Activated naive CD4-positive, alpha-beta T cell treated with anti-CD3 and anti-CD28 coated beads, Interleukin-2, amount 10 ng/mL, durations not matched to agents 7 days and 5 days (primary cell): ENCODE measurements at regions of chr9 and their contacts with region 1.

Region 1: GRCh38 chr9:15606643-15607472 is 54.0 kb downstream of the CCDC171 start:
- DNase-seq: no peak
- H3K4me3 Mint-ChIP-seq: no peak overlapping the region
- H3K27ac Mint-ChIP-seq: no peak overlapping the region
- H3K4me1 Mint-ChIP-seq: peaks cover 6% of the 10 kb centered on the region
- H3K27me3 Mint-ChIP-seq: no peaks in the 10 kb centered on the region

Region 2: DNA sequence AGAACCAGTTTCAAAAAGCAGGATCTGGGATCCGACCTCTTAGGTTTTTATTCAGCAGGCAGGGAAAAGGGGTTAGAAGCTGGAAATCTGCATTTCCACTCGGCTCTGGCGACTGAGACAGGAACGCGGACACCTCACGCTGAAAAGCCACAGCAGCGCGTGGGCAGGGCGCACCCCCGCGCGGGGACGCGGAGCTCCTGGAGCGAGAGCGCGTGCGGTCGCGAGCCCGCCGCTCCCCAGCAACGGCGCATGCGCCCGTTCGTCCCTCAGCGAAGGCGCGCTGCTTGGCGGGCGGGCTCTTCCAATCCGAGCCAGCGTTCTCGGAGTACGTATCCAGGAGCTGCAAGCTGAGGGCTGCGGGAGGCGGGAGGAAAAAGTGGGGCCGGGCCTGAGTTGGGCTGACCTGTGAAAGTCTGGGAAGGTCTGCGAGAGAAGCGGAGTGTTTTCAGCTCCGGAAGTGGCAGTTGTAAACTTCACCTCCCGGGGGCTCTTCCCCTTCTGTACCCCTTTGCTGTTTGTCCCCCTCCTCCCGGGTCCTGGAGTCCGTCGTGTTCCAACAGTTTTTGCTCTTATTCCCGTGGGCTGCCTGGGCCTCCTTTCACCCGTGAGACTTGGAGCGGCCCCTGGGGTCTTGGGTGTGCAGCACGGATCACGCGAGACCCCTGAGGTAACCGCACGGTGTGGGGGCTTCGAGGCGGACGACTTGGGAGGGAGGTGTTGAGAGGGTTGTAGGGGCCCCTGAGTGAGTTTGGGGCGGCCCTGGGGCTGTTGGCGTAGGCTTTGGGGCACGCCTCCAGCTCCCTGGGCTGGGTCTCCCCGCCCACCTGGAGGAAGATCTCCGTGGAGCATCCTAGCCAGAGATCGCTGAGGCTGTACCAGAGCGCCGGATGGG is 54.0 kb before region 1 on chr9 and contains the start of gene CCDC171:
- CTCF ChIA-PET with region 1: interaction called, 22 read pairs
- DNase-seq: peak; percentile 90
- H3K4me3 Mint-ChIP-seq: peak within 1 kb of the TSS; percentile 85
- H3K27ac Mint-ChIP-seq: peak within 1 kb of the TSS; percentile 88
- H3K4me1 Mint-ChIP-seq: peaks cover 26% of the 10 kb centered on the region
- H3K27me3 Mint-ChIP-seq: peaks cover 27% of the 10 kb centered on the region